Stomach (tissue), 19 donors: ENCODE measurements at regions of chr9 and their contacts with region 1.

Region 1: DNA sequence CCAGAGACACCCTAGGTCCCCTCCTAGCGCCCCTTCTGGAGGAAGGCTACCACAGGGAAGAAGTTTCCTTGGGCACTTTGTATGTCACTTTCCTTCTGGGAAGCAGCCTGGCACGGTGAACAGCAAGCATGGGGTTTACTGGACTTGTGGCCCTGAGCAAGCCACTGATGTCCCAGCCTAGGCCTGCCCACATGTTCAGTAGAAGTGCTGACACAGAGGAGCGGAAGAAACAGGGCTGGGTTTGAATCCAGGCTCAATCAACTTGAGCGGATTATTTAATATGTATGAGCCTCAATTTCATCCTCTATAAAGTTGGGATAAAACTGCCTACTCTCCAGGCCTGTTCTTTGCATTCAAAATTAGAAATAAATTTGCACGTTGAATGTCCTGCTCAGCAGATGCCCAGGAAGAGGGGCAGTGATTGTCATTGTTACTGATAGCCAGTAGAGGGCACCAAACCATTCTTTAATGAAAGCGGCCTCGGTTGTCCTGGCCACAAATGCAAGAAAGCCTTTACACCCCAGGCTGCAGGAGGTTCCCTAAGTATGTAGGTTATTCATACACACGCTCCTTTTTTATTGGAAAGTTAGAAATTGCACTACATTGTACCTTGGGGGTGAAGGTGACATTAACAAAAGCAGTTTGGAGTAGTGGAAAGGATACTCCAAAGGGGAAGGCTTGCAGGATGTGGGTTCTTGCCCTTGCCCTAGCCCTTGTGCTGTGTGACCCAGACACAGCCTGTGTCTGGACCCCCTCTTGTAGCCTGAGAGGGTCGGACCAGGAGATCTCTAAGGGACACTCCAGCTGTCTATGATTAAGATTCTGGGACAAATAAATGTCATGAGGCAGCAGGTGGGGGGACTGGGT is 13.4 kb upstream of the XPA start:
- DNase-seq: peak; percentile 51 to 88
- H3K4me3 ChIP-seq: no peak overlapping the region
- H3K27ac ChIP-seq: no peak overlapping the region
- H3K4me1 ChIP-seq: peaks cover 0 to 7% (median 2%) of the 10 kb centered on the region in 4 donors
- H3K27me3 ChIP-seq: peaks cover 0 to 13% (median 0%) of the 10 kb centered on the region in 3 donors
- CTCF ChIP-seq: peak in 5 of 7 experiments; percentile 50 to 89 (median 79)
- EP300 ChIP-seq: no peak
- POLR2A ChIP-seq: no peak

Region 2: DNA sequence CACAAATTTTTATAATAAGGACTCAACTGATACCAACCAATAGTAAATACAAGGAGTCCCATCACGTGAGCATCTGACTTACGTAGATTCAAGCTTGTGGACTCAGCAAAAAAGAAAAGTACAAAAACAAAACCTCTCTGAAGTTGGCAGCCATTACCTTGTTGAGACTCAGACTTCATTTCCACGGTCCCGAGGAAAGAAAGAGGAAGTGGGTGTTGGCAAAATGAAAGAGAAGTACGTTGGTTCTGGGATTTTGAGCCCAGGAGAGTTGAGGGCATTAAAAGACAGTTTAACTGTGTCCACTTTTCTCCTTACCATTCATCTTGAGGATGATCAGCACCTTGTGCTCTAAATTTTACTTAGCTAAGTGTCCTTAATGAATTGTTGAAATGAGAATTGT is 50.2 kb before region 1 on chr9:
- intact Hi-C with region 1: no loop called
- DNase-seq: no peak
- H3K4me3 ChIP-seq: no peak overlapping the region
- H3K27ac ChIP-seq: peak overlapping the region in 3 of 5 donors; percentile 38 to 46 (median 38)
- H3K4me1 ChIP-seq: peaks cover 0 to 15% (median 8%) of the 10 kb centered on the region in 4 donors
- H3K27me3 ChIP-seq: no peaks in the 10 kb centered on the region
- CTCF ChIP-seq: no peak
- EP300 ChIP-seq: no peak
- POLR2A ChIP-seq: no peak

Region 3: DNA sequence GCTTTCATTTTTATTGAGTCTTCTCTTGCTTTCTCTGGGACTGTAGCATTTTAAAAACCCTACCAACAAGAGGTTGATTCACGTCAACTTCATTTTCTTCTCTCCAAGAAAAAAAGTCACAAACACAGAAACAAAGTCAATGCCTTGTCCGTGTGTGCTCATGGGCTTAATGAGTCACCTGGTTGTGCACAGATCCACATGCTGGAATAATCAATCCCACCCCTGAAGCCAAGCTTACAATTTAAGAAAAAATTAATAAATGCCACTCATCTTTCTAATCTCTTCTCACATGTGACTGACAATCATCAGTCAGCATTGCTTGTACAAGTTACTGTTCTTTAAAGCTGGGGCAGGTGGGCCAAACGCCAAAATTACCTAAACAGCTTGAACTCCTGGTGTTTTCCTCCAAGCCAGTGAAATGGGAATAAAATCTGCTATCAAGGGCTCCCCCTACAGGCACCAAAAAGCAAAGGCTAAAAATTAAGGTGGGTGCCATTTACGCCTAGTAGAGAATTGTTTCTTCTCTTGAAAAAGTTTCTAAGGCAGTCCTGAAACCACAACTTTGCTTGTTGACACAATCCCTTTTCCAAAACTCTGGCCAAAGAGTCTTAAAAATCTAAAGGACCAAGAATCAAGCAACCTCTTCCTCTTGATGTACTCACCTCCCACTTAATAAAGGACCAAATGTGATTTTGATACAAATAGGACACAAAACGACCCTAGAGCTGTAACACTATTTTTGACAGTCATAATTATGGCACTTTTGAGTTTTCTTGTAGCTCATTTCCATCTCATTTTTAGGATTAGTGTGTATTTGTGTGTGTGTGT is 190.4 kb after region 1 on chr9:
- intact Hi-C with region 1: loop called (anchors 5 kb)
- DNase-seq: peak in 1 of 2 donors; percentile 75
- H3K4me3 ChIP-seq: no peak overlapping the region
- H3K27ac ChIP-seq: no peak overlapping the region
- H3K4me1 ChIP-seq: peaks cover 0 to 20% (median 7%) of the 10 kb centered on the region in 4 donors
- H3K27me3 ChIP-seq: no peaks in the 10 kb centered on the region
- CTCF ChIP-seq: peak in 5 of 7 experiments; percentile 45 to 72 (median 54)
- EP300 ChIP-seq: no peak
- POLR2A ChIP-seq: no peak